Lower leg skin (tissue), 4 donors: ENCODE measurements at regions of chr7 and their contacts with region 1.

Region 1: GRCh38 chr7:71694665-71695064 is 562.7 kb downstream of the GALNT17 start:
- DNase-seq: no peak
- H3K4me3 ChIP-seq: no peak overlapping the region
- CTCF ChIP-seq: no peak
- POLR2A ChIP-seq: no peak

Region 2: DNA sequence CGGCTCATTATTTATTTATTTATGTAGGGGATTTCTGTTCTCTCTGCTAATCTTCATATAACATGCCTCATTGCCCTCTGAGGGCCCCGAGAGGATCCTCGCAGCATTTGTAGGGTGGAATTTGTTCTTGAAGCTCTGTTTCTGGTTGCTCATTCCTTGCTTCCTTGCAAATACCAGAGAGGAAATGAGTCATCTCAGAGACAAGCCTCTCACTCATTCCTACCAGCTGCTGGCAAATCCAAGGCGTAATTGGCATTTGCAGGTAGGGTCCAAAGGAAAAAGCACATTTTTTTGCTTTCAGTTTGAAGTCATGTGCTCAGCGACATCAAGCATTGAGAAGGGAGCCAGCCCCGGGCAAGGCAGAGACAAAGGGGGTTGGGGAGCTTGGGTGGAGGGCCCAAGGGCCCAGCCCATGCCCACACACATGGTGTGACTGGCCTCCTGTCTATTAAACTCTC is 61.1 kb before region 1 on chr7:
- intact Hi-C with region 1: no loop called
- DNase-seq: no peak
- H3K4me3 ChIP-seq: no peak overlapping the region
- CTCF ChIP-seq: no peak
- POLR2A ChIP-seq: no peak

Region 3: DNA sequence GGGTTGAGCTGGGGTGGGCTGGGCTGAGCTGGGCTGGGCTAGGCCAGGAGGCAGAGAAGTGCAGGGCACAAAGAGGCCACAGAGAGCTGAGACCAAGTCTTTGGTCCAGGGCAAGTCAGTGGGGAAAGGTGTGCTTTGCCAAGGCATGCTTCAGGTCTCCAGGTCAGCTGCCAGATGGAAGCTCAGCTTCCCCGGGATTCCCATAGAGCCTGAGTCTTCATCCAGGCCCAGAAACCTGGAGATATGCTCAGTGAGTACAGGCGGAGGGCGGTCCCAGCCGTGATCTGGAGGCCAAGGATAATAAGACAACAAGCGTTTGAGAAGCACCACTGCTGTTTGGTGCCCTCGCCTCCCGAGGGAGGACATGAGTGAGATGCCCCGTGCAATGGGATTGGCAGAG is 722.2 kb after region 1 on chr7:
- intact Hi-C with region 1: loop called (anchors 5 kb)
- DNase-seq: no peak
- H3K4me3 ChIP-seq: no peak overlapping the region
- CTCF ChIP-seq: no peak
- POLR2A ChIP-seq: no peak